Activated naive CD4-positive, alpha-beta T cell treated with anti-CD3 and anti-CD28 coated beads for 36 hours (primary cell): ENCODE measurements at regions of chr7 and their contacts with region 1.

Region 1: GRCh38 chr7:142811154-142811737 is 40.5 kb downstream of the PRSS2 start:
- DNase-seq: peak; percentile 61
- H3K4me3 Mint-ChIP-seq: peak overlapping the region; percentile 42
- H3K27ac Mint-ChIP-seq: peak overlapping the region; percentile 99
- H3K4me1 Mint-ChIP-seq: peaks cover 83% of the 10 kb centered on the region
- H3K27me3 Mint-ChIP-seq: no peaks in the 10 kb centered on the region

Region 2: GRCh38 chr7:142301923-142302550 is 509.2 kb before region 1 on chr7:
- CTCF ChIA-PET with region 1: interaction called, 21 read pairs
- intact Hi-C with region 1: loop called (anchors 1 kb)
- DNase-seq: no peak
- H3K4me3 Mint-ChIP-seq: no peak overlapping the region
- H3K27ac Mint-ChIP-seq: no peak overlapping the region
- H3K4me1 Mint-ChIP-seq: peaks cover 30% of the 10 kb centered on the region
- H3K27me3 Mint-ChIP-seq: peaks cover 11% of the 10 kb centered on the region

Region 3: DNA sequence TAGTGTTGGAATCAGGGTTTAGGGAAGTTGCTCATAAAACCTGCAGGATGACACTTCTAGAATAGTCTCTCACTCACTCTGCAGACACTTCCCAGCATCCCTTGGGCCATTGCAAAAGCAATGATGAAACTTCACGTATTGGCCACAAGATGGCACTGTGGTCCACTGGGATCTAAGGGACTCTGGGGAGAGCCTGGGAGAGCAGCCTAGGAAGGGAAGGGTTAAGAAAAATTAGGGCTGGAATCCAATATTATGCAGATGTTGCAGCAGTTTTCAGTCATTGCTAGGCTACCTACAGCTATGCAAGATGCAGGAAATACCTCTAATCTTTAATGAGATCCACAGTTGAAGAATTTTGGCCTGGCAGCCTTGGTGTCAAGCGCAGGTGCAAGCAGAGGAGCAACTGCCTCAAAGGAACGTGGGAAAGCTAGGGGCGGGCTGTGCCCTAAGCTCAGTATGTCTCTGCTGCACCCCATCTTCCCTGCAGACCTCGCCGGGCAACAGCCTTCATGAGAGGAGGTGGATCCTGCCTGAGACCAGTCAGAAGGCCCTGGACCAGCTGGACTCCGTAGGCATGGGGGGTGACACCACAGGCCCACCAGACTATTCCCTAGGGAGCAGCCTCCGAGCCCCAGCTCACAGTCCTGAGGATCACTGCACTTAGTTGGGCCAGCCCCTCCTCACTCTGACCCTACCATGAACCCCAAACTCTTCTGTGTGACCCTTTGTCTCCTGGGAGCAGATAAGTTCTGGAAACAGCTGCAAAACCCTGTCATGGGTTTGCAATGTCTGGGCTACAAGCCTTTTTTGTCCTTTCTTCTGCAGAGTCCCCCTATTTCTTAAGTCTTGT is 425.5 kb before region 1 on chr7:
- CTCF ChIA-PET with region 1: interaction called, 17 read pairs
- intact Hi-C with region 1: loop called (anchors 2 kb)
- DNase-seq: peak; percentile 76
- H3K4me3 Mint-ChIP-seq: peak overlapping the region; percentile 32
- H3K27ac Mint-ChIP-seq: peak overlapping the region; percentile 84
- H3K4me1 Mint-ChIP-seq: peaks cover 26% of the 10 kb centered on the region
- H3K27me3 Mint-ChIP-seq: no peaks in the 10 kb centered on the region

Region 4: GRCh38 chr7:142603870-142604448 is 207.3 kb before region 1 on chr7:
- CTCF ChIA-PET with region 1: interaction called, 4 read pairs
- intact Hi-C with region 1: loop called (anchors 1 kb)
- DNase-seq: peak; percentile 71
- H3K4me3 Mint-ChIP-seq: no peak overlapping the region
- H3K27ac Mint-ChIP-seq: peak overlapping the region; percentile 68
- H3K4me1 Mint-ChIP-seq: peaks cover 6% of the 10 kb centered on the region
- H3K27me3 Mint-ChIP-seq: no peaks in the 10 kb centered on the region

Region 5: DNA sequence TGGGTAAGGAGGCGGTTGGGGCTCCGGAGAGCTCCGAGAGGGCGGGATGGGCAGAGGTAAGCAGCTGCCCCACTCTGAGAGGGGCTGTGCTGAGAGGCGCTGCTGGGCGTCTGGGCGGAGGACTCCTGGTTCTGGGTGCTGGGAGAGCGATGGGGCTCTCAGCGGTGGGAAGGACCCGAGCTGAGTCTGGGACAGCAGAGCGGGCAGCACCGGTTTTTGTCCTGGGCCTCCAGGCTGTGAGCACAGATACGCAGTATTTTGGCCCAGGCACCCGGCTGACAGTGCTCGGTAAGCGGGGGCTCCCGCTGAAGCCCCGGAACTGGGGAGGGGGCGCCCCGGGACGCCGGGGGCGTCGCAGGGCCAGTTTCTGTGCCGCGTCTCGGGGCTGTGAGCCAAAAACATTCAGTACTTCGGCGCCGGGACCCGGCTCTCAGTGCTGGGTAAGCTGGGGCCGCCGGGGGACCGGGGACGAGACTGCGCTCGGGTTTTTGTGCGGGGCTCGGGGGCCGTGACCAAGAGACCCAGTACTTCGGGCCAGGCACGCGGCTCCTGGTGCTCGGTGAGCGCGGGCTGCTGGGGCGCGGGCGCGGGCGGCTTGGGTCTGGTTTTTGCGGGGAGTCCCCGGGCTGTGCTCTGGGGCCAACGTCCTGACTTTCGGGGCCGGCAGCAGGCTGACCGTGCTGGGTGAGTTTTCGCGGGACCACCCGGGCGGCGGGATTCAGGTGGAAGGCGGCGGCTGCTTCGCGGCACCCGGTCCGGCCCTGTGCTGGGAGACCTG is 14.4 kb before region 1 on chr7:
- CTCF ChIA-PET with region 1: interaction called, 382 read pairs
- intact Hi-C with region 1: loop called (anchors 1 kb)
- DNase-seq: no peak
- H3K4me3 Mint-ChIP-seq: peak overlapping the region; percentile 88
- H3K27ac Mint-ChIP-seq: peak overlapping the region; percentile 99
- H3K4me1 Mint-ChIP-seq: peaks cover 60% of the 10 kb centered on the region
- H3K27me3 Mint-ChIP-seq: no peaks in the 10 kb centered on the region

Region 6: DNA sequence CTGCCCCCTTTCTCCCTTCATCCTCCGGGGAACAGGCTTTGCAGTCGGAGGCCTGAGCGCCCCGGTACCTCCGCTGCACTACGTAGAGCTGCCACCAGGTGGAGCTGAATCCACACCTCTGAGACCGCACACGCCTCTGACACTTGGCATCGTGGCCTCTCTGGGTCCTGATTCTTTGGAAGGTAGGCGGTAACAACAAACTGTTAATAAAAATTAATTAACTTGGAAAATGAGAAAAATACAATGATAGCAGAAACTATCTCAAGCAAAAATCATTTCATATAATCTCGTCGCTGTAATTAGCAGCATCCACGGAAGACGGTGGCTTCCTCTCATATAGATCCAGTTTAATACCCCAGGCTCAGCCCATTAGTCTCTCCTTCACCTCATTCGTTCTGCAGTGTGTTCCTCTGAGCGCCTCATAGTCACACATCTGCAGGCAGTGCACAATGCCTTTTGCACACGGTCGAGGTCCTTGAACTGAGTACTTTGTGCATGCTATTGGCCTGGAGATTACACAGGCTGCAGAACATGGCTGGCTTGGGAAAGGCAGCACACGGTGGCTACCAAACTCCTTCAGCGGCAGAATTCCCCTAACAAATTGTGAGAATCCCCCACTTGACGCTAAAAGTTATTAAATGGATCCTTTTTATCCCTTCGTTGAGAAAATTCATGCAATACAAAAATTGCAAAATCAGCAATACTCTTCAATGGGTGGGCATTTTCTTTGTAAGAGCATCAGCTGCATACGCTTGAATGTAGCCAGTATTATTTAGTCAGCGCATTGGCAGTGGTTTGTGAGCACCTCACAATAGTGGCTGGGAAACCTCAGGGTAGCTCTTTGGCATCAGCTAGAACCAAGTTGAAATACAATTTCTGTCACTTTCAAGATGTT is 197.0 kb after region 1 on chr7:
- CTCF ChIA-PET with region 1: interaction called, 11 read pairs
- intact Hi-C with region 1: loop called (anchors 1 kb)
- DNase-seq: peak; percentile 89
- H3K4me3 Mint-ChIP-seq: no peak overlapping the region
- H3K27ac Mint-ChIP-seq: no peak overlapping the region
- H3K4me1 Mint-ChIP-seq: peaks cover 3% of the 10 kb centered on the region
- H3K27me3 Mint-ChIP-seq: peaks cover 2% of the 10 kb centered on the region